Left ventricle myocardium inferior (tissue), 1 donor: ENCODE measurements at regions of chr2 and their contacts with region 1.

Region 1: DNA sequence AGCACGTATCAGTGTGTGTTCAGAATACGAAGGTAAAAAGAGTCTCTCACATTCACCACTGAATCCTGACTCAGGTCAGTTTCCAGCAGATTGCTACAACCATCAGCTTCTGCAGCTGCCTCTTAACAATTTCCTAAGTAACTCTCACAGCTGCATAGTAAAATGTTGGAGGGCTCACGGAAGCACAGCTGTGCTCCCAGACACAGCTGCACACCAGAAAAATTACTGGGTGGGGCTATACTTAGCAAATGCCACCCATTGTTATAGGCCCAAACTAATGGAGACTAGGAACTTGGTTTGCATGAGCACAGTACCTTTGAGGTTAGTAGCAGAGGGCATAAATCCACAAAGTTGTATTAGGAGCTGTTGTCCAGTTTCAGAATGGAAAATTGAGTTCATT is 153.9 kb upstream of the ERBB4 start:
- DNase-seq: no peak
- H3K4me3 ChIP-seq: no peak overlapping the region
- H3K27ac ChIP-seq: no peak overlapping the region
- H3K4me1 ChIP-seq: no peaks in the 10 kb centered on the region
- H3K27me3 ChIP-seq: no peaks in the 10 kb centered on the region
- CTCF ChIP-seq: no peak

Region 2: DNA sequence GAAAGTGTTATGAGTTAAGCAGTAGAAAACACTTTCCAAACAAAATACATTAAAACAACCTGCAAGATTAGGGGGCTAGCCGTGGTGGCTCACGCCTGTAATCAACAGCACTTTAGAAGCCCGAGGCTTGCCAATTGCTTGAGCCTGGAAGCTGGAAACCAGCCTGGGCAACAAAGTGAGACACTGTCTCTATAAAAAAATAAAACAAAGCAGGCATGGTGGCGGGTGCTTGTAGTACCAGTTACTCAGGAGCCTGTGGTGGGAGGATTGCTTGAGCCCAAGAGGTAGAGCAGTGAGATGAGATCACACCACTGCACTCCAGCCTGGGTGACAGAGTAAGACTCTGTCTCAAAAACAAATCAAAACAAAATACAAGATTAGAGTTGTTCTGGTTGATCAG is 362.2 kb before region 1 on chr2:
- intact Hi-C with region 1: no loop called
- DNase-seq: peak; percentile 16
- H3K4me3 ChIP-seq: no peak overlapping the region
- H3K27ac ChIP-seq: no peak overlapping the region
- H3K4me1 ChIP-seq: peaks cover 9% of the 10 kb centered on the region
- H3K27me3 ChIP-seq: no peaks in the 10 kb centered on the region
- CTCF ChIP-seq: no peak

Region 3: GRCh38 chr2:213175526-213176162 is 483.2 kb after region 1 on chr2:
- intact Hi-C with region 1: loop called (anchors 10 kb)
- DNase-seq: no peak
- H3K4me3 ChIP-seq: no peak overlapping the region
- H3K27ac ChIP-seq: no peak overlapping the region
- H3K4me1 ChIP-seq: no peaks in the 10 kb centered on the region
- H3K27me3 ChIP-seq: no peaks in the 10 kb centered on the region
- CTCF ChIP-seq: no peak